ENCODE measurements at regions of chr9 and their contacts with region 1.

Region 1: DNA sequence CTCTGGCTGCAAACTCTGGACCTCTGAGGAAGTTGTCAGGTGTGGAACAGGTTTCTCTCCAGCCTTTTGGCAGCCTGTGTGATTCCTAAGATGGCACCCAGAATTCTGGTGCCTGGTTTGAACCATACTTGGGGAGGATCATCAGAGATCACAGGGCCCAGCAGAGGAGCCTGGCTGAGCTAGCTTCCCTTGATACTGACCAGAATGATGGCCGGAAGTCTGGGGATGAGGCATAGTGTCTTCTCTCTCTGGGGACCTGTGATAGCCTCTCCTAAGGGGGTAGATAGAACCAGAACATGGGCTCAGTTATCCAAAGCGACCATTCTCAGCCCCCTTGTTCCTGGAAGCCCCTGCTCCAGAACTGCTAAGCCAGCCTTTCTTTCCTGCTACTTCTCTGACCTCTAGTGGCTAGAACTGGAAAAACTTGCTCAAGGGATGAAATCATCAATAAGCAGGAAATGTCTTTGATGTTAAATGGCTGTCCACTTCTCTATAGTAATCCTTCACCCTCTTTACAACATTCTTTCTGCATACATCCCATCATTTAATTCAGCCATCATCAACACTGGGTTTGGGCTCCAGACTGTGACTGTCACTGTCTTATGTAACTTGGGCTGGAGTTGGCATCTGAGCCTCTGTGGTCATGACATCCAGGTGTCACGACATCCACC is 55.1 kb downstream of the C9orf152 start:
- DNase-seq: peak; percentile 40
- H3K4me3 Mint-ChIP-seq: no peak overlapping the region
- H3K27ac Mint-ChIP-seq: peak overlapping the region; percentile 80
- H3K4me1 Mint-ChIP-seq: peaks cover 98% of the 10 kb centered on the region
- H3K27me3 Mint-ChIP-seq: no peaks in the 10 kb centered on the region

Region 2: GRCh38 chr9:110048403-110048975 is 104.3 kb before region 1 on chr9:
- CTCF ChIA-PET with region 1: interaction called, 11 read pairs
- DNase-seq: peak; percentile 91
- H3K4me3 Mint-ChIP-seq: peak overlapping the region; percentile 77
- H3K27ac Mint-ChIP-seq: peak overlapping the region; percentile 86
- H3K4me1 Mint-ChIP-seq: peaks cover 48% of the 10 kb centered on the region
- H3K27me3 Mint-ChIP-seq: peaks cover 28% of the 10 kb centered on the region

Region 3: GRCh38 chr9:110059461-110059860 is 93.4 kb before region 1 on chr9:
- CTCF ChIA-PET with region 1: interaction called, 12 read pairs
- DNase-seq: no peak
- H3K4me3 Mint-ChIP-seq: no peak overlapping the region
- H3K27ac Mint-ChIP-seq: no peak overlapping the region
- H3K4me1 Mint-ChIP-seq: peaks cover 42% of the 10 kb centered on the region
- H3K27me3 Mint-ChIP-seq: no peaks in the 10 kb centered on the region

Region 4: DNA sequence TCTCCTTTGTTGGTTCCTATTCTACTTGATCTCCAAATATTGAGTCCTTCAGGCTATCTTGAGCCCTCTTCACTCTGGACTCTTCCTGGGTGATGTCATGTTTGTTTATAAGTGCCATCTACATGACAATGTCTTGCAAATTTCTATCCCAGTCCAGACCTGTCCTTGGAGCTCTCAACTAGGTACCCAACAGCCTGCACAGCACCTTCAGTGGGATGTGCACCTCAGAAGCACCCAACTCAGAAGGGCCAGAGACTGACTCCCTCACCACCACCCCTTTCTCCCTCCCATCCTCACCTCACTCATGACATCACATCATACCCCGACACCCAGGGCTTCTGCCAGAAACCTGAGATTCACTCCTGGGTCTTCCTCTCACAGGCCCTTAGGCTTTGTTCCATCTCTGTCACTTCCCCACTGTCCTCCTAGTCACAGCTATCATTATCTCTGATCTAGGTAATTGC is 89.1 kb after region 1 on chr9:
- CTCF ChIA-PET with region 1: no interaction called
- DNase-seq: no peak
- H3K4me3 Mint-ChIP-seq: no peak overlapping the region
- H3K27ac Mint-ChIP-seq: no peak overlapping the region
- H3K4me1 Mint-ChIP-seq: no peaks in the 10 kb centered on the region
- H3K27me3 Mint-ChIP-seq: no peaks in the 10 kb centered on the region